Posterior vena cava (tissue), 2 donors: ENCODE measurements at regions of chr7 and their contacts with region 1.

Region 1: GRCh38 chr7:71768450-71768849 is 636.5 kb downstream of the GALNT17 start:
- DNase-seq: no peak

Region 2: GRCh38 chr7:71824006-71824760 is 55.7 kb after region 1 on chr7:
- intact Hi-C with region 1: loop called in 1 of 2 experiments (anchors 10 kb)
- DNase-seq: no peak